PC-9 (cell line): ENCODE measurements at regions of chr4 and their contacts with region 1.

Region 1: GRCh38 chr4:82373816-82374625 is at the start of gene HNRNPD:
- DNase-seq: peak; percentile 93 to 94
- H3K4me3 ChIP-seq: peak within 1 kb of the TSS; percentile 96
- H3K27ac ChIP-seq: peak within 1 kb of the TSS; percentile 95
- H3K4me1 ChIP-seq: peaks cover 31% of the 10 kb centered on the region
- H3K27me3 ChIP-seq: no peaks in the 10 kb centered on the region
- CTCF ChIP-seq: no peak
- total RNA-seq, gene HNRNPD: 165 and 221 TPM in 2 replicates

Region 2: GRCh38 chr4:82275431-82276331 is 98.3 kb before region 1 on chr4:
- CTCF ChIA-PET with region 1: no interaction called
- POLR2A ChIA-PET with region 1: interaction called, 37 read pairs
- intact Hi-C with region 1: no loop called
- DNase-seq: no peak
- H3K4me3 ChIP-seq: no peak overlapping the region
- H3K27ac ChIP-seq: no peak overlapping the region
- H3K4me1 ChIP-seq: no peaks in the 10 kb centered on the region
- H3K27me3 ChIP-seq: no peaks in the 10 kb centered on the region
- CTCF ChIP-seq: no peak

Region 3: GRCh38 chr4:82401368-82402000 is 27.5 kb after region 1 on chr4:
- CTCF ChIA-PET with region 1: no interaction called
- POLR2A ChIA-PET with region 1: interaction called, 5 read pairs
- intact Hi-C with region 1: loop called (anchors 2 kb)
- DNase-seq: peak; percentile 48 to 88
- H3K4me3 ChIP-seq: peak overlapping the region; percentile 57
- H3K27ac ChIP-seq: peak overlapping the region; percentile 91
- H3K4me1 ChIP-seq: peaks cover 29% of the 10 kb centered on the region
- H3K27me3 ChIP-seq: no peaks in the 10 kb centered on the region
- CTCF ChIP-seq: no peak

Region 4: DNA sequence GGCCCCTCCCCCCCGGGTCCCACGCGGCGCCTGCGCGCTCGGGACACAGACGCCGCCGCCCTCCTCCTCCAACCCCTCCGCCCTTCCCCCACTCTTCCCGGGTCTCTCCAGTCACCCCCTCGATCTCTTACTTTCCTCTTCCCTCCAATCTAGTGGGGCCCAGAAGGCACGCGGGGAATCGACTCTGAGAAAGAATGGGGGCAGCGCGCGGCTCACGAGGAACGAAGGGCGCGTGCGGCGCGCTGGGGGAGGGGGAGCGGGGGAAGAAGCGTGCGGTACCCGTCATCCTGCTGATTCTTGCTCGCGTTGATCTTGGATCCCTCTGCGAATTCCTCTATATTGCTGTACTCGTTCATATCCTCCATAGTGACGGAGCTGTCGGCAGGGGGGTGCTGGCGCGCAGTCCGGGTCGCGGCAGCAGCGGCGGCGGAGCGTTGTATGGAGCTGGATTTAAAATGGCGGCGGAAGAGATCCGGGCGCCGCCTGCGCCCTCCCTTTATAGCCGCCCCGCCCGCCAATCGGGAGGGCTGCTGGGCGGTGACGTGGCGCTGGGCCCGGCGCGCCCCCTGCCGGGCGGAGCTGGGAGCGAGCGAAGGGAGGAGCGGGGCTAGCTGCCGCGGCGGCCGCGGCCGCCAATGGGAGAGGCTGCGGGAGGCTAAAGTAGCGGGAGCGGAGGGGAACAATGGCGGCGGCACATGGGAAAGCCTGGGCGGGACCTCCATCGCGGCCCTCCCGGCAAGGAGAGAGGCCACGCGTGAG is 55.1 kb after region 1 on chr4:
- CTCF ChIA-PET with region 1: interaction called, 3 read pairs
- POLR2A ChIA-PET with region 1: interaction called, 50 read pairs
- intact Hi-C with region 1: loop called (anchors 1 kb)
- DNase-seq: peak; percentile 68 to 87
- H3K4me3 ChIP-seq: peak overlapping the region; percentile 97
- H3K27ac ChIP-seq: peak overlapping the region; percentile 87
- H3K4me1 ChIP-seq: peaks cover 47% of the 10 kb centered on the region
- H3K27me3 ChIP-seq: no peaks in the 10 kb centered on the region
- CTCF ChIP-seq: peak; percentile 77

Region 5: DNA sequence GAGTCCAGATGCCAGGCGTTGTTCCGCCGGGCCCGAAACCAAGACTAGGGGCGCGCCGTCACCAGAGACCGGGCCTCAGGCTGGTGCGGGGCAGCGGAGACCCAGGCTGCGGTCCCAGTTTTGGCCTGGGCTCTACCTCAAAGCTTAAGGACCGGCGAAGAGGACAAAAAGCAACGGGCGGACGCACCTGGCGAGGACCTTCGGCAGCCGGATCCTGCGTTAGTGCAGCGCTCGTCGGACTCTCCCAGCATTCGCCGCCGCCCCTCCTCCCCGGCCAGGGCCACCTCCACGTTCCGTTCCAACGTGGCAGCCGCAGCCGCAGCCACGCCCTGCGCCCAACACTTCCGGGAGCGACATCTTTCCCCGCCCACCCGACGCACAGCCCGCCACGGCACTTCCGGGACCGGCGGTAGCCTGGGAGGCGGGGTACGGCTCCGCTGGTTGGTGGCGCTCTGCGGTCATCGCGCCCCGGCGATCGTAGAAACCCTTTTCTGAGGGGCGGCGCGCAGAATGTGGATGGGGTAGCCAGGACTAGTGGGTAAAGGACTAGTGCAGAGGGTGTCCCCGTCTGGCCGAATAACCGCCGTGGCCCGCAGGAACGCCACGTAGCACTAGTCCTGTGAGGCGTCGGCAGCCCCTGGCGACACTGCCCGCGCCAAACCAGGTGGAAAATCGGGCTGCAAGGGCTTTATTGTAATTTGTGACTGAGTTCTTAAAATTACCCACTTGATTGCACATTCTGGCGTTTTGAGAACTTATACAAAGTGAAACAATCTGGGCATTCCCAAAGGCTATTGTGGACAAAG is 517.1 kb after region 1 on chr4 and contains the start of gene SEC31A:
- CTCF ChIA-PET with region 1: no interaction called
- POLR2A ChIA-PET with region 1: no interaction called
- intact Hi-C with region 1: loop called (anchors 10 kb)
- DNase-seq: peak; percentile 80 to 91
- H3K4me3 ChIP-seq: peak within 1 kb of the TSS; percentile 98
- H3K27ac ChIP-seq: peak within 1 kb of the TSS; percentile 93
- H3K4me1 ChIP-seq: peaks cover 18% of the 10 kb centered on the region; the same call in 1 of the 2 replicates
- H3K27me3 ChIP-seq: no peaks in the 10 kb centered on the region
- CTCF ChIP-seq: no peak
- total RNA-seq, gene SEC31A: 69.0 and 95.5 TPM in 2 replicates